IMR-90 (cell line): ENCODE measurements at regions of chr1 and their contacts with region 1.

Region 1: DNA sequence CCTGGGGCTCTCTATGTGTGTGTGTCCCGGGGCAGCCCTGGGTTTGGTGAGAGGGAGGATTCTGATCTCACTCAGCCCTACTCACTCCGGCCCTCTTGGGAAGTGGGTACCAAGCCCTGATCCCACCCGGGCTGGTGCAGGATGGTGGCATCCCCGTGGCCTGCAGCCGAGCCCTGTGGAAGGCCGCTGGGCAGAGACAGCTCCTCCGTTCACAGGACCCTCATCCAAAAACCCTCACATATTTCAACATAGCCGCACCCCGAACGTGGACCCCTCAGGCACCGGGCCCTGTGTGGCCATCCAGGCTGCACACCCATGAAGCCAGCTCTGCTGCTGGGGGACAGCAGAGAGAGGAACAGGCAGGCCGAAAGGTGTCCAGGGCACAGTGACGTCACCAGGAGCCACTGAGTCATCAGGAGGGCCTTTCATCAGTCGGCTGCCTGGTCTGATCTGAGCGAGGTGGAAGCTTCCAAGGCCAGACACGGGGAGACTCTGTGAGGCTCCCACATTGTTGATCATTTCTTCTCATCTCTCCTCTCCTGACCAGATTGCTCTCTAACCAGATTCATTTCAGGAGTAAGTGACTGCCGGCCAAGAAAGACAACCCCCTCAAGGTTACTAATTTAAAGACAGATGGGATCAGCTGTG is 16.2 kb upstream of the GPR157 start:
- DNase-seq: peak; percentile 81
- ATAC-seq: peak; percentile 61
- H3K4me3 ChIP-seq: no peak overlapping the region
- H3K27ac ChIP-seq: no peak overlapping the region
- H3K4me1 ChIP-seq: peaks cover 7% of the 10 kb centered on the region; the same call in 1 of the 2 replicates
- H3K27me3 ChIP-seq: no peaks in the 10 kb centered on the region
- CTCF ChIP-seq: no peak
- POLR2A ChIP-seq: no peak
- RAD21 ChIP-seq: no peak

Region 2: GRCh38 chr1:9101510-9102146 is 43.5 kb before region 1 on chr1:
- CTCF ChIA-PET with region 1: no interaction called
- POLR2A ChIA-PET with region 1: interaction called, 19 read pairs
- dilution Hi-C with region 1: no loop called
- in situ Hi-C with region 1: no loop called
- intact Hi-C with region 1: no loop called
- DNase-seq: peak; percentile 68
- ATAC-seq: peak; percentile 81
- H3K4me3 ChIP-seq: no peak overlapping the region
- H3K27ac ChIP-seq: no peak overlapping the region
- H3K4me1 ChIP-seq: peaks cover 3% of the 10 kb centered on the region
- H3K27me3 ChIP-seq: no peaks in the 10 kb centered on the region
- CTCF ChIP-seq: peak; percentile 81
- POLR2A ChIP-seq: no peak
- RAD21 ChIP-seq: peak; percentile 82

Region 3: DNA sequence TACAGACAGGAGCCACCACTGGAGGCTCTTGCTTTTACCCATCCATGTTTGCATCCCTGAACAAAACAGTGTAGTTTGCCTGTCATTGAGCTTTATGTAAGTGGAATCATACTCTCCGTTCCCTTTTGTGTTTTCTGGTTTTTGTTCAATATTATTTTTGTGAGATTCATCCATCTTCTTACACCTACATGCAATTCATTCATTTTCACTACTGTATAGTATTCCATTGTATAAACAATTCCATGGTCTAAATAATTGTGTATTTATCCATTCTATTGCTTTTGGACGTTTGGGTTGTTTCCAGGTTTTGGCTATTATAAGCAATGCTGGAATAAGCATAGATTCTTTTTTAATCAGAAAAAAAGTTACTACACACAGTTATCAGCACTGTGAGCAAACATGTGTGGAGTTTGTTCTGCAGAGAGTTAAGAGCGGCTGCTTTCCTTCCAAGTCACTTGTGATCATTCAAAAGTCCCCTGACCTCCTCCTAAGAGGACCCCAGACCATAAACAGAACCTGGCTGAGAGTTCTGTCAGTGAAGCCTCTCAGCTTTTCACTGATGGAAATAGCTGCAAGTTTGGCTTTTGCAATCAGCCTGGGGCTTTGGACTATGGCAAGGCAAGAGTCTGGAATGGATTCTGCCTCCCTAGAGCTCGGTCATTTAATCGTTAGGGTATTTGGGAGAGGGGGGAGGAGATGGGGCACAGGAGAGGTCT is 11.1 kb before region 1 on chr1:
- CTCF ChIA-PET with region 1: no interaction called
- POLR2A ChIA-PET with region 1: no interaction called
- dilution Hi-C with region 1: no loop called
- in situ Hi-C with region 1: no loop called
- intact Hi-C with region 1: loop called (anchors 2 kb)
- DNase-seq: no peak
- ATAC-seq: no peak
- H3K4me3 ChIP-seq: no peak overlapping the region
- H3K27ac ChIP-seq: no peak overlapping the region
- H3K4me1 ChIP-seq: peaks cover 4% of the 10 kb centered on the region; the same call in 1 of the 2 replicates
- H3K27me3 ChIP-seq: peaks cover 2% of the 10 kb centered on the region; the same call in 1 of the 2 replicates
- CTCF ChIP-seq: no peak
- POLR2A ChIP-seq: no peak
- RAD21 ChIP-seq: no peak

Region 4: DNA sequence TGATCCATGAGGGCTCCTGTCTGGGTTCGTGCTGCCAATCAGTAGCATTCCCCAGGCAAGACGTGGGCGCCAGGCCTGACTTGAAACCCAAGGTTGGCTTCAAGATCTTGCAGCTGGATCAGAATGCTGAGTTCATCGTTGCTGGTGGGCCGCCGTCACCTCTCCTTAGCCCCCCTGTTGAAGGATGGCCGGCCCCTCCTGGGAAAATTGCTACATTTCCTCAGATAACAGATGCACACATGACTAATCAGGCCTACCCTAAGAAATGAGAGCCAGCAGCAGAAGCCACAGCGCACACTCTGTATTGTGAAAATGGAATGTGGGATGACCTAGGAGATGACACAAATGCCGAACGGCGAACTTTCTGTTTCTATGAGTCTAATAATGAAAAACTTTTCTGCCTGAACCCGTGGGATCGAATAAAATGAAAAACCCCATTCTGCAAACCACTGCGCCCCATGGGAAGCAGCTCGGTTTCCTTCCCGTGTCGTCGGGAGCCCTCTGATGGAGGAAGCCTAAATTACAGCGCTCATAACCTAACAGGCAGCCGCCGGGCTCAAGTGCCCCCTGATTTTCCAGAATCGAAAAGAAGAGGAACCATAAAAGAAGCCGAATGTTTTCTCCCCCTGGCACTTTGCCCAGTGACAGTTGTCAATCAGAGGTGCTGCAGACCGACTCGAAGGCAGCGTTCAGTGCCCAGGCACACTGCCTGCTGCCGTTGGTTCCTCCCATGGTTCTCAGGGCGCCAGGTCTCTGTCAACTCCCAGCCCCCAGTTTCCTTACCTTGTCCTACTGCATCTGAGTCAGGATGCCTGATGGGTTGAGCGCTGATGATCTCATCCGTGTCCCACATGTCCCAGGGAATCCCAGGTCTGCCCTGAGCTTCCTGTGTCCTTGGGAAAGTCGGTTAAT is 51.2 kb after region 1 on chr1:
- CTCF ChIA-PET with region 1: interaction called, 4 read pairs
- POLR2A ChIA-PET with region 1: no interaction called
- dilution Hi-C with region 1: no loop called
- in situ Hi-C with region 1: no loop called
- intact Hi-C with region 1: loop called (anchors 2 kb)
- DNase-seq: peak; percentile 94
- ATAC-seq: peak; percentile 68
- H3K4me3 ChIP-seq: peak overlapping the region; percentile 2; the same call in 1 of the 2 replicates
- H3K27ac ChIP-seq: peak overlapping the region; percentile 71
- H3K4me1 ChIP-seq: peaks cover 30% of the 10 kb centered on the region
- H3K27me3 ChIP-seq: no peaks in the 10 kb centered on the region
- CTCF ChIP-seq: peak; percentile 76
- POLR2A ChIP-seq: no peak
- RAD21 ChIP-seq: peak; percentile 77